ENCODE measurements at regions of chr9 and their contacts with region 1.

Region 1: DNA sequence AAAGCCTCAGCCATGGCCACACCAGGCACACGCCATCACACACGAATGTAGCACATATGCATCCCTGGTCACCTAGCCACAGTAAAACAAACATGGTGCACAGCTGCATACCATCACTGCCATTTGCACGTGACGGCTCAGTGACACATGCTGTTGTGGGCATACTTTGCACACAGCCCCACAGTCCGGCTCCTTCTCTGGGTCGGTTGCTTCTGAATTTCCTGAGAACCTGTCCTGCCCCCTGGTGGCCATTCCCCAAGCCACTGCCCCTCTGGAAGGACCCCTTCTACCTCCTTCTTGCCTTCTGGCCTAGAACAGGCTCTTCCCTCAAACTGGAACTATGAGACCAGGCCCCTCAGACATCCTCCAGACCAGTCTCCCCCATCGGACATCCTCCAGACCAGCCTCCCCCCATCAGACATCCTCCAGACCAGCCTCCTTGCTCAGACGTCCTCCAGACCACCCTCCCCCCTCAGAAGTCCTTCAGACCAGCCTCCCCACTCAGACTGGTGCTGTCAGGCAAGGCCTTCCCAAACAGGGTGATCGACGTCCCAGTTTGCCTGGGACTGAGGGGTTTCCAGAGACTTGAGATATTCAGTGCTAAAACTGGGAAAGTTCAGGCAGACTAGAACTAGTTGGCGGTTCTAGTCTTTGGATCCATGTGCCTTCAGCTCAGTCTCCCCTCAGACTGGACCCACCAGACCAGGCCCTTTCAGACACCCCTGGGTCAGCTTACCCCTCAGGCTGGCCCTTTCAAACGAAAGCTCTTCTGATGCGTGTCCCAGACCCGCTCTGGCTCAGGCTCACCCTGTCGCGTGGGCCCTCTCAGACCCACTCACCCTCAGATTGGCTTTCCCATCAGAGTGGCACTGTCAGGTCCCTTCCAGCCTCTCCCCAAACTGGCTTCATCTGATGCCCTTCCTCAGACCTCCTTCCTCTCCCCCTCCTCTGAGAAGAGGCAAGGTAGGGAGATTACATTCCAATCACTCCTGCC is 24.3 kb upstream of the ENHO start:
- DNase-seq: peak; percentile 59
- H3K4me3 ChIP-seq: no peak overlapping the region
- H3K27ac ChIP-seq: no peak overlapping the region
- H3K4me1 ChIP-seq: no peaks in the 10 kb centered on the region
- H3K27me3 ChIP-seq: no peaks in the 10 kb centered on the region
- CTCF ChIP-seq: peak; percentile 58 to 77

Region 2: GRCh38 chr9:34328987-34329832 is 217.9 kb before region 1 on chr9 and contains the starts of genes KIF24 and NUDT2:
- CTCF ChIA-PET with region 1: no interaction called
- dilution Hi-C with region 1: no loop called
- in situ Hi-C with region 1: no loop called
- intact Hi-C with region 1: loop called (anchors 5 kb)
- DNase-seq: peak; percentile 100
- H3K4me3 ChIP-seq: peak within 1 kb of the TSS; percentile 85 to 89 (median 86)
- H3K27ac ChIP-seq: peak within 1 kb of the TSS; percentile 96
- H3K4me1 ChIP-seq: peaks cover 45% of the 10 kb centered on the region
- H3K27me3 ChIP-seq: no peaks in the 10 kb centered on the region
- CTCF ChIP-seq: no peak
- total RNA-seq, gene KIF24: 1.3 to 3.9 TPM
- total RNA-seq, gene NUDT2: 17.8 to 22.9 TPM

Region 3: DNA sequence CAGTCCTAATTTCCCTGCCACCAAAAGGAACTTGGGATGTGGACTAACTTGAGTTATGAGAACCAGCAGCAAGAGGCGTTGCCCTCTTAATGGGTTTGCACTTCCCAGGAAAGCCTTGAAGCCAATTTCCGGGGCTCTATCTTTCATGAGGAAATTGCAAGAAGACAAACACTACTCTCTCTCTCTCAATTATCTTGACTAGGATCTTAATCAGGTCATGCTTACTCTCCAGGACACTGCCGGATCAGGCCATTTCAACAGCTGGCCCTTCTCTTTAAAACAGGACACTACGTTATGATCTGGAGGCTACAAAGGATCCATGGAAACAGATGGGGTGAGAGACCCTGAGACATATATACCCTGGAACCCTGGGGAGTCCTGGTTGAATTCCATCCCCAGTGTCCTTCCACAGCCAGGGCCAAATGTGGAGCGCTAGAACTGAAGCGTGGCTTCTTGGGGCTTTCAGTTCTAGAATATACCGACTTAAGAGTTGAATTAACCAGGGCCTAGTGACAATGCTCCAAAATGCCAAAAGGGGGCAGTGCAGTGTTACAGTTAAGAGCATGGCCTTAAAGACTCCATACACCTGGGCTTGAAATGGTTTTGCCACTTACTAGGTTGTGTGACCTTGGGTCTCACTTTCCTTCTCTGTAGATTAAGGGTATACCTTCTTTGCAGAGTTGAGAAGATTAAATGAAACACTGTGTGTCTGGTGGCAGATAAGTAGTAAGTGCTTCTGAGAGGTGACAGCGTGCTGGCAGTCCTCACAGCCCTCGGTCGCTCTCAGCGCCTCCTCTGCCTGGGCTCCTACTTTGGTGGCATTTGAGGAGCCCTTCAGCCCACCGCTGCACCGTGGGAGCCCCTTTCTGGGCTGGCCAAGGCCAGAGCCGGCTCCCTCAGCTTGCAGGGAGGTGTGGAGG is 109.9 kb before region 1 on chr9:
- CTCF ChIA-PET with region 1: no interaction called
- dilution Hi-C with region 1: no loop called
- in situ Hi-C with region 1: no loop called
- intact Hi-C with region 1: loop called (anchors 1 kb)
- DNase-seq: peak; percentile 61
- H3K4me3 ChIP-seq: no peak overlapping the region
- H3K27ac ChIP-seq: no peak overlapping the region
- H3K4me1 ChIP-seq: no peaks in the 10 kb centered on the region
- H3K27me3 ChIP-seq: no peaks in the 10 kb centered on the region
- CTCF ChIP-seq: peak; percentile 79 to 93

Region 4: DNA sequence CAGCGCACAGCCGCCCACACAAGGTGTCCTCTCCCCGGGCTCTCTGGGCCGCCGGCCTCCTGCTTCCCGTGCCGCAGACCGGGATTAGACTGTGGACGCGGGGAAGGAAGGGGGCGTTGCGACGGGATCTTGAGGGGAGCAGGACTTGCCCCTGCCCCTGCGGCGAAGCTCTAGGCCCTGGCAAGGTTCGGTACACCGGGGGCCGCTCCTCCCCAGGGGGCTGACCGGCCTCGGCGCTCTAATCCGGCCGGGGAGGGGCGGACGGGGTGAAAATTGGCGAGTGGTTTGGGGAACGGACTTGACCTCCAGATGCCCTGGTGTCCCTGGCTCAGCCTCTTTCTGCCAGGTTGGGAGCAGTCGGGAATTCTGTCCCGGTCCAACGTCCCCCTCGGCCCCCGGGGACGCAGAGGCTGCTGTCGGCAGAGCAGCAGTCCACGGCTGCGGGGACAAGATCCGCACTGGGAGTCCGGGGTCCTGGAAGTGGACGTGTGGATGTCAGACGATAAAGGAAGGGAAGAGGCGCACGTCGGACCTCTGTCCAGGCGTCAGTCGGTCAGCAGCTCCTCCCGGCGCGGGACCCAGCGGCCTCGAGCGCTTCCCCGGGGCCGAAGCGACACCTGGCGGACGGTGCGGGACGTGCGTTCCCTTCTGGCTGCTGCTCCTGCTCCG is 44.3 kb after region 1 on chr9:
- CTCF ChIA-PET with region 1: interaction called, 15 read pairs
- dilution Hi-C with region 1: no loop called
- in situ Hi-C with region 1: loop called in 1 of 2 experiments (anchors 10 kb)
- intact Hi-C with region 1: loop called (anchors 1 kb)
- DNase-seq: peak; percentile 57
- H3K4me3 ChIP-seq: no peak overlapping the region
- H3K27ac ChIP-seq: no peak overlapping the region
- H3K4me1 ChIP-seq: peaks cover 14% of the 10 kb centered on the region
- H3K27me3 ChIP-seq: peaks cover 42% of the 10 kb centered on the region
- CTCF ChIP-seq: peak; percentile 79 to 89

Region 5: DNA sequence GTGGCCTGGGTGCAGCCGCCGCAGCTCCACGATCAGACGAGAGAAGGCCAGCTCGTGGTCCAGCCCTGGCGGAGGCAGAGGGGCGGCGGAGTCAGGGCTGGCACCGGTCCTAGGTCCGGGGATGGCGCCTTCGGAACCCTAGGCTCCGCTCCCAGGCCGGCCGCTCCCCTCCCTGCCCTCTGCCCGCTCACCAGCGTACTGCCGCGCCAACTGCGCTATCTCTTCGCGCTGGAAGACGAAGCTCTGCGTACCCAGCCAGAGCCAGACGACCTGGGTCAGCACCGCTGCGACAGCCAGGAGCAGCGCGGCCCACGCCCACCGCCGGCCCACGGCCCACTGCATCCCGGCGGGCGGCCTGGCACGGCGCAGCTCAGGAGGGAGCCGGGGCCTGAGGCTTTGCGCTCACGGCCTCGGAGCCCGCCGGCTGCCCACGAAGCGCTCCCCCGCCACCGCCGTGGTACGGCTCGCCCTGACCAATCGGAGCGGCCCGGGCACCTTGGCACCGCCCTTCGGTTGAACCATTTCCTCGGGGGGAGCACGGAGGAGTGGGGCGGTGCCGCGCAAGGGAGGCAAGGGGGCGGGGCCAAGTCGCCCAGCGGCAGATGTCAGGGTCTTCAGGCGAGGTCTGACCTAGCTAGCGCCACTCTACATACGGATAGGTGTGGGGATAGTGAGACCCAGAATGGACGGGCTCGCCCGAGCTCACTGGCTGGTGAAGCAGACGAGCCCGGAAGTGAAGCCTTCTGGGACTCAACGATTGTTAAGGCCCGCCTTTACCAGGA is 90.4 kb after region 1 on chr9 and contains the start of gene SIGMAR1:
- CTCF ChIA-PET with region 1: no interaction called
- dilution Hi-C with region 1: no loop called
- in situ Hi-C with region 1: no loop called
- intact Hi-C with region 1: loop called (anchors 1 kb)
- DNase-seq: peak; percentile 94
- H3K4me3 ChIP-seq: peak within 1 kb of the TSS; percentile 62 to 91 (median 88)
- H3K27ac ChIP-seq: peak within 1 kb of the TSS; percentile 35
- H3K4me1 ChIP-seq: peaks cover 4% of the 10 kb centered on the region
- H3K27me3 ChIP-seq: no peaks in the 10 kb centered on the region
- CTCF ChIP-seq: no peak
- total RNA-seq, gene SIGMAR1: 83.0 to 131 TPM

Region 6: DNA sequence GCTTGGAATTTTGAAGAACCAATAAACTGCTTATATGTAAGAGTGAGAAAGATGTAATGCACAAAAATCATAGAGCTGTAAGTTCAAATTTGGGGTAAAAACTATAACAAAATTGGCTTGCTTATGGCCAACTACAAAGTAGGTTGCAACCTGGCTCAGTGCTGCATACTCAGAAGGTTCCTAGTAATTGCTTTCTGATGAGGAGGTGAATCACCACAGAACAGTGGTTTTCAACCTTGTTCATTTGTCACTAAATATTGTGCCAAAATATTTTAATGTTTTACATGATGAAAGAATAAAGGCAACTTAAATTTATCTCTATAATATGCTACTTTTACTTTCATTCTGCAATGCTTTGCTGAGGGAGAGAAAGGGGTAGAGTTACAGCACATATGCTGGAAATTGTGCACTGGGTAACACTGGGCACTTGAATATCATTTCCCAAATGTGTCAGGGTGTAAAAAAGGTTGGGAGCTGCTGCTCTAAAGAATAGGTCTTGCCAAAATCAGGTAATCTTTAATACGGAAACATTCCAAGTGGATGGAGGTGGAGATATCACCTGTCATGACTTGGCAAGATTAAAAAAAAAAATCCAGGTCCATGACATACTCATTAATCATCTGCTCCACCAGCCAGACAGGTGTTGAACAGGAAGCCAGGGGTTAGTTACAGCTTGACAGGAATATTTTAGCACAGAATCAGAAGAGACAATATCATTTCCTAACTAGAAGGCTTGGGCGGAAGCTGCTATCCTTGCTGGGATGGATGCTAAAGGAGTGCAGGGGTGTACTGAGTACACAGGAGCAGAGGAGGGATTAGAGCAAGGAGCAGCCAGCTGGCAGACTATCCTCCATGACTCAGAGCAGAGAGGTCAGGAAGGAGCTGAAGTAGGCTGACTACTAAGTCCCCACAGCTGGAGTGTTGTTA is 197.4 kb after region 1 on chr9:
- CTCF ChIA-PET with region 1: no interaction called
- dilution Hi-C with region 1: no loop called
- in situ Hi-C with region 1: no loop called
- intact Hi-C with region 1: no loop called
- DNase-seq: peak; percentile 98
- H3K4me3 ChIP-seq: peak overlapping the region in 1 of 3 experiments; percentile 10
- H3K27ac ChIP-seq: peak overlapping the region; percentile 60
- H3K4me1 ChIP-seq: peaks cover 40% of the 10 kb centered on the region
- H3K27me3 ChIP-seq: no peaks in the 10 kb centered on the region
- CTCF ChIP-seq: no peak

Region 7: GRCh38 chr9:34983209-34983608 is 436.1 kb after region 1 on chr9:
- CTCF ChIA-PET with region 1: no interaction called
- dilution Hi-C with region 1: no loop called
- in situ Hi-C with region 1: no loop called
- intact Hi-C with region 1: no loop called
- DNase-seq: no peak
- H3K4me3 ChIP-seq: no peak overlapping the region
- H3K27ac ChIP-seq: no peak overlapping the region
- H3K4me1 ChIP-seq: peaks cover 13% of the 10 kb centered on the region
- H3K27me3 ChIP-seq: no peaks in the 10 kb centered on the region
- CTCF ChIP-seq: no peak

Measured in mammary epithelial cell (primary cell).